AG04449 (cell line): ENCODE measurements at regions of chr13 and their contacts with region 1.

Region 1: GRCh38 chr13:101144808-101145419 is 271.4 kb downstream of the NALCN start:
- DNase-seq: no peak
- H3K4me3 ChIP-seq: no peak overlapping the region
- CTCF ChIP-seq: peak; percentile 19

Region 2: GRCh38 chr13:100904293-100904976 is 240.5 kb before region 1 on chr13:
- CTCF ChIA-PET with region 1: no interaction called
- POLR2A ChIA-PET with region 1: no interaction called
- DNase-seq: no peak
- H3K4me3 ChIP-seq: no peak overlapping the region
- CTCF ChIP-seq: no peak

Region 3: DNA sequence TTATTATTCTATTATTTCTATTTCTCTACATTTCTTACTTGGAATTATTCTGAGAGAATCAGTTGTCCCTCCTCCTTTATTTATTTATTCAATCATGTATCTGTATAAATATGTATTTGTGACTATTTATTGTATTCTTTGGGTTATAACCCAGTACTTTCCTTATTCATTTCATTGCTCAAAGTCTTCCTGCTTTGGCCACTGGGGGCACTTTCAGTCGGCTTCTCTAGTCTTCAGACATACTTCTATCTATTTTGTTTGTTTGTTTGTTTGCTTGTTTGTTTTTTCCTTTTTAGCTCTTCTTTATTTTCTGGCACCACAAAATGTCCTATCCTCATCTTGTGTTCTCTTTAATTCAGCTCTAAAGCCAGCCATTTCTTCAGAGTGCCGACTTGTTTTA is 11.0 kb after region 1 on chr13:
- CTCF ChIA-PET with region 1: interaction called, 17 read pairs
- POLR2A ChIA-PET with region 1: no interaction called
- DNase-seq: no peak
- H3K4me3 ChIP-seq: no peak overlapping the region
- CTCF ChIP-seq: no peak

Region 4: GRCh38 chr13:101307181-101307701 is 162.3 kb after region 1 on chr13:
- CTCF ChIA-PET with region 1: interaction called, 17 read pairs
- POLR2A ChIA-PET with region 1: no interaction called
- DNase-seq: peak; percentile 91
- H3K4me3 ChIP-seq: no peak overlapping the region
- CTCF ChIP-seq: no peak

Region 5: GRCh38 chr13:101474419-101474957 is 329.6 kb after region 1 on chr13:
- CTCF ChIA-PET with region 1: interaction called, 66 read pairs
- POLR2A ChIA-PET with region 1: interaction called, 7 read pairs
- DNase-seq: peak; percentile 76
- H3K4me3 ChIP-seq: no peak overlapping the region
- CTCF ChIP-seq: peak; percentile 55

Region 6: DNA sequence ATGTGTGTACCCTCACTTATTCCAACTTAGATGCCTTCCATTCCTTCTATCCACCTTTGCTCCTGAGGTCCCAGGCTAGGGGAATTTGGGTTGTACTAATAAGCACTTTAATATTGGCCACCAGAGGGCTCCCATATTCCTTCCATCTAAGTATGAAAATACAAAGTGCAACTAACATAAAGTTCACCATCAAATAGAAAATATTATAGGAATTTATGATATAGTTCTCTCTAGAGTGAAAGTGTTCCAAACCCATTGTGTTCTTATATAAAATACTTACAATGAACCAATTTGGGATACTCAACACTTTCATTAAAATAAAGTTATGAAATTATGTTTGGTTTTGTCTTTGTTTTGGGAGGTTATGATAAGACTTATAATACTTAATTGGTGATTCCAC is 369.9 kb after region 1 on chr13:
- CTCF ChIA-PET with region 1: interaction called, 18 read pairs
- POLR2A ChIA-PET with region 1: no interaction called
- DNase-seq: no peak
- H3K4me3 ChIP-seq: no peak overlapping the region
- CTCF ChIP-seq: peak; percentile 53

Region 7: DNA sequence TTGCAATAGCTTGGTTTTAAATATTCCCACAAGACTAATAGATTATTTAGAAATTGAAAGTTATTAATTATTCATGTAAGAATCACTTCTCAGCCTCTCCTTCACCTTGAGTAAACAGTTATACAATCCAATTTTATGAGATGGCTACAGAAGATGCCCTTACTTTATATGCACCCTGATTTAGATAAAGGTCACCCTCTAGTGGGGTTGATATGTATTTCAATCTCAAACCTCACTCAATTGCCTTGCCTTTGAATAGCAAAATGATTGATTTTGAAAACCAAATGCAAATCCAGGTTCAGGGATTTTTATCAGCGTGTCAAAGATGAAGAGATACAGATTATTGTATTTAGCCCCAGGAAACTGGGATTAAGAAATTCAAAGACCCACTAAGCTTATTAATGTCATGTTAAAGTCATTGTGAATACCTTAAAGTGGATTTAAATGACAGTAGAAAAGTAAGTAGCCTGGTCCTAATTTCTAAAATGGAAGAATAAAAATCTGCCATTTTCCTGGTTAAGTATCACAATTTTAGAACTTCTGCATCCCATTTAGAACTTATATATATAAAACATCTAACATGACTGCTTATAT is 612.6 kb after region 1 on chr13:
- CTCF ChIA-PET with region 1: interaction called, 122 read pairs
- POLR2A ChIA-PET with region 1: no interaction called
- DNase-seq: no peak
- H3K4me3 ChIP-seq: no peak overlapping the region
- CTCF ChIP-seq: peak; percentile 41

Region 8: DNA sequence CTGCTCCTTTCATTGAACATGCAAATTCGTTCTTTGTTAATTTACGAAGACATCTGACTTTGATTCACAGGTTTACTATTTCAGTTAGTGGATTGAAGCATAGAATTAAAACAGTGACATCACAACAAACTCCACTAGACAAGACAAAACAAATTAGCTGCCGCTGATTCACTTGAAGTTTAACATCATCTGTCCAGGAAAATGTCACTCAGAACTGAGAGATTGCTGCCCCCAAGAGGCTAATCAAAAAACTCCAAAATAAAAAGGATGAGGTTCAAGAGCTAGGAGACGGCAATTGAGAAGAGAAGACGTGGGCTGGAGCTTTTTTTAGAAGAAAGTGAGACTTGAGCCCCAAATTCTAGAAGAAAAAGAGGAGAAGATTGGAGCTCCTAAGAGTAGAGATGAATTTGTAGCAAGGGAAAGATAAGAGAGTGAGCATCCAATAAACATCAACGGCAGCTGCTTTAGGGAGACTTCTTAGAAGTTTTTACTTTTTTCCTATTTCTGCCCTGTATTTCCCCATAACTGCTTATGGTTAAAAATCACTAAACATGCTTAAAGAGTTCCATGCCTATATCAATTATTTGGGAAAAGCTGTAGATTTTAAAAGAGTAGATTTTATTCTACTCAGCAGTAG is 1411.1 kb after region 1 on chr13:
- CTCF ChIA-PET with region 1: interaction called, 14 read pairs
- POLR2A ChIA-PET with region 1: no interaction called
- DNase-seq: no peak
- H3K4me3 ChIP-seq: no peak overlapping the region
- CTCF ChIP-seq: peak; percentile 15